Dendritic cell treated with granulocyte-macrophage colony-stimulating factor and Interleukin-4, amounts not matched to agents 40 ng/mL and 50 ng/mL, for 4 days (primary cell): ENCODE measurements at regions of chr5 and their contacts with region 1.

Region 1: DNA sequence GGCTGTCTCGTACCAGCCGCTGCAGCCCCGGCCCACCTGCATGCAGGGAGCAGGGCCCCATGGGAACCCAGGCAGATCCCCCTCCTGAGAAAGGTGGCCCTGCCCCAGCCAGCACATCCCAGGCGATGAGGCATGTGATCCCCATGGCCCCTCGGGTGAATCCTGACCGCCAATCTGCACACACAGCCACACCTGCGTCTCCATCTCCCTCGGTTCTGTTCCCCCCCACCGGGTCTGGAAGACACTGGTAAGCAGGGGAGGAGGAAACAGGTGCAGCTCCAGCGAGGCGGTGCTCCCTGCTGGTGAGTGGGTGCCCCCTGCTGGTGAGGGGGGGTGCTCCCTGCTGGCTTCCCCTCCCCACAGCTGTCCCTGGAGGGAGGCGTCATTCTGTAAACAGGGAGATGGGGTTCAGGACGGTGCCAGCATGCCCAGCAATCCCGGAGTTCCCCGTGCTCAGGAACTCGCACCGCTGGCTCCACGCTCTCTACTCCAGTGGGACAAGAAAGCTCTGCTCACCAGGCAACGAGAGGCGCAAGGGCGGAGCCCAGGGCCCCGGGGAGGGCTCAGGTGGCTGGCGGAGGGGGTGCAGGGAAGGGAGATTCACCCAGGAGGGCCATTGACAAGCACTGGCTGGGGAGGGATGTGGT is 28.4 kb upstream of the SLC12A7 start:
- H3K4me3 Mint-ChIP-seq: no peak overlapping the region
- H3K27ac Mint-ChIP-seq: peak overlapping the region; percentile 42
- H3K4me1 Mint-ChIP-seq: peaks cover 31% of the 10 kb centered on the region
- H3K27me3 Mint-ChIP-seq: peaks cover 35% of the 10 kb centered on the region

Region 2: DNA sequence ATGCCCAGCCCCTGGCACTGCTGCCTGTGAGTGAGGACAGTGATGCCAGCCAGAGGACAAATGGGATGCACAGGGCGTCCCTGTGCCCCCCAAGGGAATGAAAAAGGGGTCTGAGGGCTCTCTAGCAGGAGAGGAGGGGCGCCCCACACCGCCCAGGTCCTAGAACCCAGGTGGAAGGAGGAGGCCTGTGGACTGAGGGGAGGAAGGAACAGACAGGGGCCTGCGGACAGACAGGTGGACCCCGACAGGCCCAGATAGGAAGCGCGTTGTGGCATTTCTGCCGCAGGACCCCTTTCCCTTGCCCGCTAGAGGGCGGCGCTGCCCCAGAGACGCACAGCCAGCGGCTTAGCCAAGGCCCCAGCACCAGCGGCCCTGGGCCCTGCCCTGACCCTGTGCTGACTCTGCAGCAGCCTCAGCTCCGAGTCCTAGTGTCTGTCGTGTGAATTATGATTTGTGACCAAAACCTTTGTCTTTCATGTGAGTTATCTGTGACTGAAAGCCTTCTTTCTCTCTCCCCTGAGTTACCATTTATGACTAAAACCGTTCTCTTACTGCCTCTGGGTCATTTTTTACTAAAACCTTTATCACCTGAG is 216.9 kb before region 1 on chr5:
- intact Hi-C with region 1: loop called (anchors 1 kb)
- H3K4me3 Mint-ChIP-seq: no peak overlapping the region
- H3K27ac Mint-ChIP-seq: no peak overlapping the region
- H3K4me1 Mint-ChIP-seq: peaks cover 6% of the 10 kb centered on the region
- H3K27me3 Mint-ChIP-seq: peaks cover 45% of the 10 kb centered on the region

Region 3: DNA sequence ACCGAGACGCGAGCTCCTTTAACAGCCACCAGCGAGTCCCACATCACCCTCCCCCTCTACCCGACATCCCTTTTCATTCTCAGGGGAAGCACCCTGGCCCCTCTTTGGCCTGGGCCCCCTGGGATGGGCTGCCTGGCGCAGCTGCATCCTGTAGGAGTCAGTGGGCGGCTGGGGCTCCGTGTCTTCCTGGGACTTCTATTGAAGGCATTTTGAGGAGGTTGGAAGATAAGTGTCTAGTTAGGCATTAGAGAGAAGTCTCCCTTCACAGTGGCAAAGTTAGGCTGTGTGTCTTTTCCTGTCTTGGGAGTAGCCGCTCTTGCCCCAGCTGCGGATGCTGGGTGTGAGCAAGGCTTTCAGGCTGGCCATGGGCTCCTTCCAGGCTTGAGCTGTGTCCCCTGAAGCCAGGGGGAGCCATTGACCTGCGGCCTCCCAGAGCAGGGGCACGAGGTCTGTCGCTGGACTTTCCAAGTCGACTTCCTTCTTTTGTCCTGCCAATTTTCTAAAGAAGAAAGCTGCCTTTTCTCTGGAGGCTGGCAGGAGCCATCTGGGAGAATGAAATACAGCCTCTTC is 150.2 kb before region 1 on chr5:
- intact Hi-C with region 1: loop called (anchors 1 kb)
- H3K4me3 Mint-ChIP-seq: peak overlapping the region; percentile 37
- H3K27ac Mint-ChIP-seq: peak overlapping the region; percentile 83
- H3K4me1 Mint-ChIP-seq: peaks cover 13% of the 10 kb centered on the region
- H3K27me3 Mint-ChIP-seq: peaks cover 51% of the 10 kb centered on the region

Region 4: DNA sequence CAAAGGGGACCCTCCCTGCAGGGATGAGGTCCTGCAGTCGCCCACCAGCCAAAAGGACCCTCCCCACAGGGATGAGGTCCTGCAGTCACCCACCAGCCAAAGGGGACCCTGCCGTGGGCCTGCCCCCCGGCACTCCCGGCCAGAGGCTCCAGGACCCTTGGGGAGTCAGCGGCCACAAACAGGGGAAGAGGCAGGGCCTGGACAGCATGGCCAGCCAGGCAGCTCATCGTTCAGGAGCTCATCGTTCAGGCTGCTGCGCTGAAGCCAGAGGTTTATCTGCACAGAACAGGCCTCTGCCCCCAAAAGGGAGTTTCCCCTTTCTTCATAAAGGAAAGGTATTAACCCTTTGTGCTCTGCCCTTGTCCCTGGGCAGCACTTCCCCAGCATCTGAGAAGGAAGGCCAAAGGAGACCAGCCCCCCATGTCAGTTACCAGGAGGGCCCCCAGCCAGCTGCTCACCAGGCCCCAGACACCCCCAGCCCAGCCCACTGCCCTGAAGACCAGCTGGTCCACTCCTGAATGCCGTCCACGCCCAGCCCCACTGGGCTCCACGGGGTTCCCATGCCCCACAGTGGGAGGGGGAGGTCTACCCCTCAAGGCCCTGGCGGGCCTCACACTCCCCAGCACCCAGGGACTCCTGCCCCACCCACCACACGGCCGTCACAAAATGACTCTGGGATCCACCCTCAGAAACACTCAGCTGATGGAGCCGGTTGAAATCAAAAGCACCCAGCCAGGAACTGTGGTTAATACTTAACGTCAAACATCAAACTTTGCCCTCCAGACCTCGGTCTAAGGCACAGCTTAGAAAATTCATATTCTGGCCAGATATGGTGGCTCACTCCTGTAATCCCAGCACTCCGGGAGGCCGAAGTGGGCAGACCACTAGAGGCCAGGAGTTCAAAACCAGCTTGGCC is 34.7 kb before region 1 on chr5:
- intact Hi-C with region 1: loop called (anchors 5 kb)
- H3K4me3 Mint-ChIP-seq: peak overlapping the region; percentile 76
- H3K27ac Mint-ChIP-seq: peak overlapping the region; percentile 91
- H3K4me1 Mint-ChIP-seq: peaks cover 98% of the 10 kb centered on the region
- H3K27me3 Mint-ChIP-seq: no peaks in the 10 kb centered on the region